ENCODE measurements at regions of chr6 and their contacts with region 1.

Region 1: GRCh38 chr6:16128759-16129622 is at the start of gene MYLIP:
- H3K4me3 ChIP-seq: peak within 1 kb of the TSS; percentile 98
- H3K27ac ChIP-seq: peak within 1 kb of the TSS; percentile 95
- H3K4me1 ChIP-seq: peaks cover 21% of the 10 kb centered on the region
- CTCF ChIP-seq: peak; percentile 95

Region 2: GRCh38 chr6:15662326-15663129 is 466.5 kb before region 1 on chr6 and contains the start of gene DTNBP1:
- CTCF ChIA-PET with region 1: interaction called, 3 read pairs
- POLR2A ChIA-PET with region 1: interaction called, 10 read pairs
- H3K4me3 ChIP-seq: peak within 1 kb of the TSS; percentile 86
- H3K27ac ChIP-seq: peak within 1 kb of the TSS; percentile 61; the same call in 1 of the 2 replicates
- H3K4me1 ChIP-seq: no peaks in the 10 kb centered on the region; the same call in 1 of the 2 replicates
- CTCF ChIP-seq: peak; percentile 65; the same call in 1 of the 2 replicates

Region 3: DNA sequence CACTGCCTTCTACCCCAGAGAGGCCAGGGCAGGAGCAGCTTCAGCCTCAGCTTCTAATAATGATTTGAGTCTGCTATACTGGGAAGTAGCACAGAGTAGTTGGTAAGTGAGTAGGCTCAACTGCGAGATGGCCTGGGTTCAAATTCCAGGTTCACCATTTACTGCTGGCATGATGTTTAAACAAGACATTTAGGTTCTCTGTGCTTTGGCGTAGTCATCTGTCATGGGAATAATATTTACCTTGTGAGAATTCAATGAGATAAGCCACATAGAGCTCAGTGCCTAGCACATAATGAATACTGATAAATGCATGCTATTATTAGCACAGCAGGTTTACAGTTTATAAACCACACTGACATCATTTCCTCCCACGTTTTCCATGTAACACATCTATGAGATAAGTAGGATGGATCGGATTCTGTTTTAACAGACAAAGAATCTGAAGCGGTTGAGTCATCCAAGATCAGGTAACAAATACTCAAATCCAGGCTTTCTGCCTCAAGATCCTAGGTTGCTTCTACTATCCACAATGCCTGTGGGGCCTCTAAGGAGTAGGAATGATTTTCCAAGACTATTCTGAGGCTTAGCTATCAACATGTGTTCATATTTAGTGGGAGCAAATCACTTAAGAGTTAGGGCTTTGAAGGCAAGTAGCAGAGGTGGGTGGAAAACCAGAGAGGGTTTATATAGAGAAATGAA is 393.3 kb before region 1 on chr6:
- CTCF ChIA-PET with region 1: no interaction called
- POLR2A ChIA-PET with region 1: interaction called, 13 read pairs
- H3K4me3 ChIP-seq: no peak overlapping the region
- H3K27ac ChIP-seq: peak overlapping the region; percentile 57
- H3K4me1 ChIP-seq: peaks cover 10% of the 10 kb centered on the region
- CTCF ChIP-seq: no peak

Region 4: DNA sequence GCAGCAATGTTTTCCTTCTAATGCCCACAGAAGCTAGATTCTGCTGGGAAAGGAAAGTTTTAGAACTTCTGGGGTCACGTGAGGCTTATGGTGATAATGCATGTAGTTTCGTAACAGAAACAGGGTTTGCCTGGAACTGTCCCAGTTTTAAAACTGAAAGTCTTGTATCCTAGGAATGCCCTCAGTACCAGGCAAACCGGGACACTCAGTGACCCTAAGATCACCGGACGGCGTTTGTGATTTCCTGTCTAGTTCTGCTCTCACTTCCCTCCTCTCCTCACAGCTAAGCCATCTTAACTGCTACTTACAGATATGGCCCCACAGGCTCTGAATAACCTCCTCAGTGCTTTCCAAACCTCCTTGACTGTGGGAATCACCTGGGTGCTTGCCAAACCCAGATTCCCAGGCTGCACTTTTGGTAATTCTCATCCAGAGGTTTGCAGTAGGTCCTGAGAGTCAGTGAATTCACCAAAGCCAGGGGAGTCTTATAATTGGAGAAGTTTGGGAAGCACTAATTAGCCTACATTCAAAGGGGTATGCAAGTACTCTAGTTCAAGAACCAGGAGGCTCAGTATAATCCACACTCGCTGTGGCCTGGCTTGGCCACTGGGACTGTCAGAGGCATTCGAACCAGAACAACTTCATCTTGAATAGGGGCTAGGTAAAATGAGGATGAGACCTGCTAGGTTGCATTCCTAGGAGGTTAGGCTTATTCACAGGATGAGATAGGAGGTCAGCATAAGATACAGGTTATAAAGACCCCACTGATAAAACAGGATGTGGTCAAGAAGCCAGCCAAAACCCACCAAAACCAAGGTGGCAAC is 231.7 kb before region 1 on chr6:
- CTCF ChIA-PET with region 1: interaction called, 7 read pairs
- POLR2A ChIA-PET with region 1: interaction called, 13 read pairs
- H3K4me3 ChIP-seq: no peak overlapping the region
- H3K27ac ChIP-seq: no peak overlapping the region
- H3K4me1 ChIP-seq: peaks cover 2% of the 10 kb centered on the region
- CTCF ChIP-seq: no peak

Region 5: GRCh38 chr6:15955944-15956735 is 172.9 kb before region 1 on chr6:
- CTCF ChIA-PET with region 1: no interaction called
- POLR2A ChIA-PET with region 1: interaction called, 11 read pairs
- H3K4me3 ChIP-seq: no peak overlapping the region
- H3K27ac ChIP-seq: peak overlapping the region; percentile 75
- H3K4me1 ChIP-seq: peaks cover 40% of the 10 kb centered on the region
- CTCF ChIP-seq: no peak; the same call in 1 of the 2 replicates

Region 6: GRCh38 chr6:16183187-16183664 is 54.2 kb after region 1 on chr6:
- CTCF ChIA-PET with region 1: interaction called, 33 read pairs
- POLR2A ChIA-PET with region 1: interaction called, 25 read pairs
- H3K4me3 ChIP-seq: no peak overlapping the region
- H3K27ac ChIP-seq: no peak overlapping the region
- H3K4me1 ChIP-seq: no peaks in the 10 kb centered on the region
- CTCF ChIP-seq: peak; percentile 32; the same call in 1 of the 2 replicates

Region 7: DNA sequence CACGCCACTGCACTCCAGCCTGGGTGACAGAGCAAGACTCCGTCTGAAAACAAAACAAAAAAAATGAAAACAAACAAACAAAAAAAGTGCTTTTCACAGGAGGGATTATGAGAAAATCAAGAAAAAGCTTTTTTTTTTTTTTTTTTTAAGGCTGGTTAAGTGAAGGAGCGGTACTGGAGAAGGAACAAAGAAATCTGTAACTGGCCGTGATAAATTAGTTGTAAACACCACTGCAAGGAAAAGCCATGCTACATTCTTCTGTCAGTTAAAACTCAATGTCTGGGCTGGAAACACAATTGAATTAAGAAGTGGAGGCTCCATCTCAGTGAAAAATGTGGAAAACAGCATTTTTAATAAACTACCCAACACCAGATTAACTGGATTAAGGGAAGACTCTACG is 103.1 kb after region 1 on chr6:
- CTCF ChIA-PET with region 1: interaction called, 4 read pairs
- POLR2A ChIA-PET with region 1: interaction called, 13 read pairs
- H3K4me3 ChIP-seq: no peak overlapping the region
- H3K27ac ChIP-seq: no peak overlapping the region
- H3K4me1 ChIP-seq: peaks cover 11% of the 10 kb centered on the region; the same call in 1 of the 2 replicates
- CTCF ChIP-seq: no peak

Region 8: GRCh38 chr6:16403831-16404230 is 274.8 kb after region 1 on chr6:
- CTCF ChIA-PET with region 1: no interaction called
- POLR2A ChIA-PET with region 1: no interaction called
- H3K4me3 ChIP-seq: no peak overlapping the region
- H3K27ac ChIP-seq: no peak overlapping the region
- H3K4me1 ChIP-seq: no peaks in the 10 kb centered on the region
- CTCF ChIP-seq: no peak

Measured in HEK293 (cell line).